ENCODE measurements at regions of chr10 and their contacts with region 1.

Region 1: DNA sequence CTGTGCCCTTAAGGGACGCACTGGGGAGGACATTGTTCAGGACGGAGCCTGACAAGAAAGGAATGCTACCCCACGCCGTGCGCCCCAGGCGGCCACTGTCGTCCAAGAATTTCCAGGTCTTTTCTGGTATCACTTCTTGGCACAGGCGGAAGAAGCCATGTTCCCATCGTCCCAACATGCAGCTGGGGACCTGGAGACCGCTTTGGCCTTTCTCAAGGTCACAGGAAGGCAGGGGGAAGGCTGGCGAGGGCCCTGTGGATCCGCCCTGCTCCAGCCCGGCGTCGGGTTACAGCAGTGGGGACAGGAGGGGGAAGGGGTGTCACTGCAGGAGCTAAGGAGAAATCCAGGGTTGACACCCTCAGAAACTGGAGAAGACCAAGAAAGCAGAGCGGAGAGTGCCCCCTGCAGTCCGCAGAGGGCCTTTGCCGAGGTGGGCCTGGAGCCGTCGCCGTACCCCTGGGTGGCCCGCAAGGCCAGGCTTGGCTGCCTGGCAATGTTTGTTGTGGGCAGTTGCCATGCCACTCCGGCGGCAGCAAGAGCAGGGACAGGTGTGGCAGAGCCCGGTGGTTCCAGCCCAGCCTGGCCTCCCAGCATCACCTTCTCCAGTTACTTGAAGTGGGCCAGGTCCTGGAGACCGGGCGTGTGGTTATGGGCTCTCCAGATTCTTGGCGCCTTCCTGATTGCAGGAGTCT is 104.1 kb downstream of the LHPP start:
- DNase-seq: peak; percentile 82
- ATAC-seq: peak; percentile 94
- H3K4me3 Mint-ChIP-seq: no peak overlapping the region
- H3K27ac Mint-ChIP-seq: peak overlapping the region; percentile 77
- H3K4me1 Mint-ChIP-seq: peaks cover 15% of the 10 kb centered on the region
- H3K27me3 Mint-ChIP-seq: no peaks in the 10 kb centered on the region
- CTCF ChIP-seq: peak; percentile 63

Region 2: GRCh38 chr10:124403548-124403947 is 162.2 kb before region 1 on chr10:
- CTCF ChIA-PET with region 1: interaction called, 17 read pairs
- POLR2A ChIA-PET with region 1: no interaction called
- DNase-seq: peak; percentile 30
- ATAC-seq: peak; percentile 98
- H3K4me3 Mint-ChIP-seq: no peak overlapping the region
- H3K27ac Mint-ChIP-seq: peak overlapping the region; percentile 95
- H3K4me1 Mint-ChIP-seq: peaks cover 9% of the 10 kb centered on the region
- H3K27me3 Mint-ChIP-seq: no peaks in the 10 kb centered on the region
- CTCF ChIP-seq: no peak

Region 3: DNA sequence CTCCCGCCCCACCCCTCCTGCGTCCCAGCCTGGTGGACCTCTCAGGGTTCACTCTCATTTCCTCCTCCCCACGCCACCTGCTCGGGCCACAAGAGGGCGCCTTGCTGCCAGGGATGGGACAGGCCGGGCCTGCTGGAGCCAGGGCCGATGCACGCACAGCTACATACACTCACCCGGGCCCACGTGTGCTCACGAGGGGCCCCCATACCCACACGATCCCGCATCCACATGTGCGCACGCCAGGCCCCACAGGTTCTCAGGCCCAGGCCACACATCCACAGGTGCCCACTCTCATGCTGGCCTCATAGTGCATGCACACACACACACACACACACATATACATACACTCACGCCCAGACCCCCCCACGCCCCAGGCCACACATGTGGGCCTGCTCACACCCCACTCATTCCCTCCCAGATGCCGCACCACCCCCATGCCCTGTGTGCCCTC is 35.5 kb before region 1 on chr10:
- CTCF ChIA-PET with region 1: interaction called, 35 read pairs
- POLR2A ChIA-PET with region 1: no interaction called
- DNase-seq: peak; percentile 92
- ATAC-seq: peak; percentile 81
- H3K4me3 Mint-ChIP-seq: no peak overlapping the region
- H3K27ac Mint-ChIP-seq: no peak overlapping the region
- H3K4me1 Mint-ChIP-seq: peaks cover 32% of the 10 kb centered on the region
- H3K27me3 Mint-ChIP-seq: no peaks in the 10 kb centered on the region; the same call in 1 of the 2 replicates
- CTCF ChIP-seq: peak; percentile 83

Region 4: GRCh38 chr10:124539935-124540641 is 25.6 kb before region 1 on chr10:
- CTCF ChIA-PET with region 1: interaction called, 33 read pairs
- POLR2A ChIA-PET with region 1: no interaction called
- DNase-seq: peak; percentile 79
- ATAC-seq: peak; percentile 72
- H3K4me3 Mint-ChIP-seq: no peak overlapping the region
- H3K27ac Mint-ChIP-seq: no peak overlapping the region
- H3K4me1 Mint-ChIP-seq: peaks cover 10% of the 10 kb centered on the region
- H3K27me3 Mint-ChIP-seq: no peaks in the 10 kb centered on the region
- CTCF ChIP-seq: no peak

Region 5: DNA sequence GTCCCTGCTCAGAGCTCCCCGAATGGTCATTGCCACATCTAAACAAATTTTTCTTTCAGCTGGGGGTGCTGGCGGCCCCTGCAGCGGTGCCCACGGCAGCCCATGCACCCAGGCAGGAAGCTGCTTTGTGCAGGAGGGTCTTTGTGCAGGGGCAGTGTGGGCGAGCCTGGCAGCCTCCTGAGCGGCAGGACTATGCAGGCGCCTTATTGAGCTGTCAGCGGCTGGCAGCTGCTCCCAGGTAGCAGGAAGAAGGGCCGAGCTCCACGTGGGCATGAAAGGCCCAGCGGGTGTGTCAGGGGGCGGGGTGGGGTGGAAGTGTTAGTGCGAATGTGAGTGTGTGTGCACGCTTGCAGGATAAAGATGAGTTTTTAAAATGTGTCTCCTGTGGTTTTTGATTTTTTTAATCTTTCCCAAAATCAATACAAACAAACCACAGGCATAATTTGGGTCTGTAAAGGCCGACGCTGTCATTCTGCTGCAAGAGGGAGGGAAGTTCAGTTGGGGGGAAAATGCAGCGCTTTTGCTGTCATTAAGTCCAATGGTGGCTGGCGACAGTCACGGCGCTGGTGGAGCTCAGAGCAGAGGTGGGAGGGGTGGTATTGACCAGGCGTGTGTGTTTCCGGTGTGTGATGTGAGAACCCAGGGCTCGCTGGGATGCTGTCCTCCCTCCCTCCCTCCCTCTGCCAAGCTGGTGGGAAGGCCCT is 20.2 kb before region 1 on chr10:
- CTCF ChIA-PET with region 1: interaction called, 33 read pairs
- POLR2A ChIA-PET with region 1: interaction called, 3 read pairs
- DNase-seq: no peak
- ATAC-seq: no peak
- H3K4me3 Mint-ChIP-seq: no peak overlapping the region
- H3K27ac Mint-ChIP-seq: no peak overlapping the region
- H3K4me1 Mint-ChIP-seq: no peaks in the 10 kb centered on the region
- H3K27me3 Mint-ChIP-seq: no peaks in the 10 kb centered on the region
- CTCF ChIP-seq: no peak

Region 6: DNA sequence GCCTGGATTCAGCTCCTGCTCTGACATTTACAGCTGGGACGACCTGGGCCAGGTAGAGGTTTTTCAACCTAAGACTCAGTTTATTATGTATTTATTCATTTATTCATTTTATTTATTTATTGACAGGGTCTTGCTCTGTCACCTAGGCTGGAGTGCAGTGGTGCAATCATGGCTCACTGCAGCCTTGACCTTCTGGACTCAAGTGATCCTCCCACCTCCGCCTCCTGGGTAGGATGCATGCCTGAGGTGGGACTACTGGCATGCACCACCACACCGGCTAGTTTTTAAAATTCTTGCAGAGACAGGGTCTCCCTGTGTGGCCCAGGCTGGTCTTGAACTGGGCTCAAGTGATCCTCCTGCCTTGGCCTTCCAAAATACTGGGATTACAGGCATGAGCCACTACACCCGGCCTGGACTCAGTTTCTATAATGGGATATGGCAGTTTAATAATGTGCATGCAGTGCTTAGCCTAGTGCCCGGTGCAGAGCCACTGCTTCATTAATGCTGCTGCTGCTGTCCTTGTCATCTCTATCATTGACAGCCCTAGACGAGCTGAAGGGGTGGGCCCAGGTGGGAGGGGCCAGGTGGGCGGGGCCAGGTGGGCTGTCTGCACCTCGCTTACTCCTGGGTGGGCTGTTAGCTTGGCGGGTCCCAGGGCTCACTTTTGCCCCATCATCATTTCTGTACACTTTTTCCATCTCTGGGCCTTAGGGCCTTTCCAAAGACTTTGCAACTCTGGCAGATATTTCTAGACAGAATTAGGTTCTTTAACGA is 11.4 kb before region 1 on chr10:
- CTCF ChIA-PET with region 1: interaction called, 21 read pairs
- POLR2A ChIA-PET with region 1: no interaction called
- DNase-seq: peak; percentile 58
- ATAC-seq: peak; percentile 64
- H3K4me3 Mint-ChIP-seq: no peak overlapping the region
- H3K27ac Mint-ChIP-seq: no peak overlapping the region
- H3K4me1 Mint-ChIP-seq: peaks cover 5% of the 10 kb centered on the region; the same call in 1 of the 2 replicates
- H3K27me3 Mint-ChIP-seq: no peaks in the 10 kb centered on the region
- CTCF ChIP-seq: no peak